PC-3 (cell line): ENCODE measurements at regions of chr1 and their contacts with region 1.

Region 1: GRCh38 chr1:230268366-230269170 is 157.6 kb downstream of the PGBD5 start:
- DNase-seq: peak; percentile 80
- ATAC-seq: peak; percentile 83
- H3K4me3 ChIP-seq: no peak overlapping the region
- H3K27ac ChIP-seq: peak overlapping the region; percentile 8; the same call in 1 of the 2 replicates
- H3K4me1 ChIP-seq: peaks cover 4% of the 10 kb centered on the region; the same call in 1 of the 2 replicates
- H3K27me3 ChIP-seq: no peaks in the 10 kb centered on the region
- CTCF ChIP-seq: peak; percentile 85

Region 2: GRCh38 chr1:229661022-229661877 is 607.3 kb before region 1 on chr1:
- CTCF ChIA-PET with region 1: no interaction called
- POLR2A ChIA-PET with region 1: no interaction called
- intact Hi-C with region 1: loop called (anchors 1 kb)
- DNase-seq: peak; percentile 84
- ATAC-seq: peak; percentile 92
- H3K4me3 ChIP-seq: no peak overlapping the region
- H3K27ac ChIP-seq: no peak overlapping the region
- H3K4me1 ChIP-seq: no peaks in the 10 kb centered on the region
- H3K27me3 ChIP-seq: no peaks in the 10 kb centered on the region
- CTCF ChIP-seq: peak; percentile 91